Lower leg skin (tissue), 4 donors: ENCODE measurements at regions of chr5 and their contacts with region 1.

Region 1: DNA sequence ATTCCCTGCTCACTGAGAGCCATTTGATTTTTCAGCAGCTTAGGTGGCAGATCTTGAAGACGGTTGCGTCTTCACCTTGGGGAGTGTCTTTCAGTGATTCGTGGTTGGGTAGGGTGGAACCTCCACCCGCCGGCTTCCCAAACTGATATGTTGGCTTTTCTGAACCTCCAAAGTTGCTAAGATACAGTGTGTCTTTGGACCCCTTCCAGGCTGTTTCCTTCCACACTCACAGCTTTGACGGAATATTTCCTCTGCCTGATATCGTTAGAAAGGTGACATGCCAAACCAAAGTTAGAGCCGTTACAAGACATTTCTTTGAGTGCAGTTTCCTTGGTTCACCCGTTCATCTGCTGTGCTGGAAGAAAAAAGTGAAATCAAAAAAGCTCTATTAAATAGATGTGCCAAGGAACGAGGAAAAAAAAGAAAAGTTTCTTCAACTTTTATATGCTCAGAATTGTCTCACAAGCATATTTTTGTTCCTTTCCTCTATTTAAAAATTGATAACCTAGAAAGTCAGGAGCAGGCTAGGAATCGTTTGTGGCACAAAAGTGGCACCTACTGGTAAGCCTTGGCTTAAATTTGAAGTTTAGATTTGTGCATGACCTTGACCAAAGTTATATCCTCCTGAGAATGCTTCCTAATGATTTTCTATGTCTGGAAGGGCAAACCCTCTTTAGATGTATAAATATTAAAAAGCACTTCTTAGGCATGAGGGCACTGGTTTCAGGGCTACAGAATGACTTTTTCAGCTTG is 270.7 kb upstream of the WWC1 start:
- DNase-seq: no peak
- H3K4me3 ChIP-seq: no peak overlapping the region
- CTCF ChIP-seq: no peak
- POLR2A ChIP-seq: no peak

Region 2: DNA sequence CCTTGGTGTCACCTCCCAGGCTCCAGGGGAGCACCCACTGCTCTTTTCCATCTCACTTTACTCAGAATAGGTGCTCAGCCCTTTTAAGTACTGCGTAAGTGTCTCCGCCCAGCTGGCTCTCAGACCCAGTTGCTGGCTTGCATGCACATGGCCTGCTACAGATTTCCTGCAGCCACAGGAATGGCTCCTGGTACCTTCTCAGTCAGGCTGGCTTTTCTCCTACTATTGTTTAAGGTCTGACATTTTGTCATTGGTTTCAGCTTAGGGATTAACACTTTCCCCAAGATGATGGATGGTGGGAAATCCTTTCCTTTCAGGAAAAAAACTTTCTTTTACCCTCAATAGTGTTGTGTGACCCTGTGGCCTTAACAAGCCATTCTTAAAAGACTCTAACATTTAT is 1381.6 kb before region 1 on chr5:
- intact Hi-C with region 1: no loop called
- DNase-seq: no peak
- H3K4me3 ChIP-seq: no peak overlapping the region
- CTCF ChIP-seq: no peak
- POLR2A ChIP-seq: no peak

Region 3: GRCh38 chr5:167723254-167723871 is 297.4 kb before region 1 on chr5:
- intact Hi-C with region 1: loop called (anchors 5 kb)
- DNase-seq: peak; percentile 59 to 93
- H3K4me3 ChIP-seq: no peak overlapping the region
- CTCF ChIP-seq: peak in 1 of 3 donors; percentile 18
- POLR2A ChIP-seq: no peak

Region 4: DNA sequence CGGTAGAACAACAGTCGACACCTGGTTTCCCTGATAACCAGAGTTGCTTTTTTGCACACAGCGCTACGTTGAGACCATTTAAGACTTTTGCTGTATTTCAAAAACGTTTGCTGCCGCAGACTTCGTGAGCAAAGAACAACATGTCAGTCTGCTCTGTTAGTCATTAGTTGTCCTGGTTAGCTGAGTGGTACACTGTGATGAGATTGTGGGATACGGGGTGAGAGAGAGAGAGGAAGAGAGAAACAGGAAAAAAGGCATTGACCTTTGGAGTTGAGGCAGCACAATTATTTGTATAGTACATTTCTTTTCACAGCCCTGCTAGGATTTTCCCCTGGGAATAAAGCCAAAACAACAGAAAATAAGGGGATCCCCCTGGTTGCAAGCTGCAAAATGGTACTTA is 35.3 kb before region 1 on chr5:
- intact Hi-C with region 1: no loop called
- DNase-seq: no peak
- H3K4me3 ChIP-seq: no peak overlapping the region
- CTCF ChIP-seq: no peak
- POLR2A ChIP-seq: no peak